Posterior vena cava (tissue), 2 donors: ENCODE measurements at regions of chr4 and their contacts with region 1.

Region 1: DNA sequence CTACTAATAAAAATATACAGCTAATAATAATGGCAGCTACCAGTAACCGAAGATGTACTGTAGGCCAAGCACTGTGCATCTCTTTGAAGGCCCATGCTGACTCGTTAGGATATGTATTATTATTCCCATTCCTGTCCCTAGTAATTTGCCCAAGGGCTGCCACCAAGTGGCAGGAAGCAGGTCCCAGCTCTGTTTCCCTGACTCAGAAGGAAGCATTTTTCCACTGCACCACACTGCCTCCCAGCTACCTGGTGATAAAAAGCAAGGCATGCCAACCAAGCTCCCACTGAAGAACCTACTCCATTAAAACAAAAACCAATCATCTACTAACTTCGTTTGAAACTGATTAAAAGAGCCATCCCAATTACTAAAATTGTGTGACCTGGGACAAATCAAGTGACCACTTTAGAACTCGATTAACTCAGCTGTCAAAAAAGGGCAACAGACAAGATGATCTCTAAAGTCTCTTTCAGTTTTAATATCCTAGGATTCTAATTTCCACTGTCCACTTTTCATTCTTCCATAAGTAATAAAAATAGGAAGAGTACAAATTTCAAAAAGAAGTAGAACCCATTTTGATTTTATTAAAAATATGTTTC is 24.3 kb upstream of the PGM2 start:
- DNase-seq: no peak

Region 2: GRCh38 chr4:37389967-37390580 is 412.1 kb before region 1 on chr4:
- intact Hi-C with region 1: no loop called
- DNase-seq: no peak

Region 3: DNA sequence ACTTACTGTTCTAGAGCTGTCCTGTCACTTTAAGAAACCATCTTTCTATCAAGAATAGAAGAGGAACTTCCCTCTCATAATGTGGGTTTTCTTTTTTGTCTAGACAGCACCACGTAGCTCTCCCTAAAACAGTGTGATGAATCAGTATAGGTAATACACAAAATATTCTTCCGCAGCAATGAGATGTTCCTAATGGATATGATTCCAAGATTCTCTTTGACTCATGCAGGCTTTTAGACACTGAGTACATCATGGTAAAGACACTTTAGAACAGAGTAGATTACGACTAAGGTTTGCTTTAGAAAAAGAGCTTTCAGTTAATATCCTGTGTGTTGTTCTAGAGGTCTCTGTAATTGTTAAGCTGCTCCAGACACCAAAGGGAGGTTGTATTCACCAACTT is 227.9 kb after region 1 on chr4:
- intact Hi-C with region 1: loop called (anchors 1 to 5 kb)
- DNase-seq: no peak

Region 4: DNA sequence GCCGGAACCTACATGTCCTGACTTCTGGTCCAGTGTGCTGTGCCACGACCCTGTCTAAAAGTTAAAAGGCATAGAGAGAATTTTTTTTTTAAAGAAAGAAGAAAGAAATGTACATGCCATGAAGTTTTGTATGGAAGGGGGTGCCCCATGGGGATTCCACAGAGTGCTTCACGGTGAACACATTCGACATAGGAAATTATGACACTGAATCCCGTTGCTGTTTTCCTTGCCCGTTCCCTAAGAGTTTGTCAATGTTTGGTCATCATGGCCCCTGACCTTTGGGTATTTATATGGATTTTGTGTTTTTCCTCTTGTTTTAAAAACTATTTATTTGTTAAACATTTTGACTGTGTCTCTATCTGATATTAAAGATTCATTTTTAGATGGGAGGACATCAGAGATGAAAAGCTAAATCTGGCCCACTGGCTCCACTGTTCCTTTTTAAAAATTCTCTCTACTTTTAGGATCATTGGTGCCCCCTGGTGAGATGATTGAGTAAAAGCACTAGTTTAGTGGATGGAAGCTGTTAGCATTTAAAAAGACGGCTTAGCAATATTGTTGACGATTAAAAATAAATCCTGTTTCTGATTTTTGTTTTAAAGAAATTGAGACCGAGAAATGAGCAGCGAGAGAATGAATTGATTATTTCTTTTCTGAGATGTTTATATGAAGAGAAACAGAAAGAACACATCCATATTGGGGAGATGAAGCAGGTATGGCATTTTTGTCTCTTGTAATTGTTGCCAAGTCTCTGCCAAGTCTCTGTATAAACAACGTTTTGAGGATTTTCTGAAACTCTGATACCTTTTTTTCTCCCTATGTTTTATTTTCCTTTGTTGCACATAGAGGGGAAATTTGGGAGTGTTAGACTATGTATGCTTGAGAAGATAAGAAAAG is 233.1 kb after region 1 on chr4:
- intact Hi-C with region 1: loop called (anchors 1 to 5 kb)
- DNase-seq: no peak